T-cell (primary cell): ENCODE measurements at regions of chr1 and their contacts with region 1.

Region 1: GRCh38 chr1:212595787-212596714 is 12.5 kb upstream of the ATF3 start:
- DNase-seq: peak in 13 of 35 experiments; percentile 8 to 73 (median 23)
- ATAC-seq: peak; percentile 88 to 97 (median 92)
- H3K4me3 ChIP-seq: peak overlapping the region in 1 of 2 donors; percentile 19
- H3K4me3 Mint-ChIP-seq: peak overlapping the region; percentile 59 to 77 (median 76)
- H3K27ac ChIP-seq: peak overlapping the region; percentile 64
- H3K27ac Mint-ChIP-seq: peak overlapping the region; percentile 85 to 88
- H3K4me1 ChIP-seq: peaks cover 6 to 10% of the 10 kb centered on the region in 2 experiments
- H3K4me1 Mint-ChIP-seq: peaks cover 16 to 17% (median 17%) of the 10 kb centered on the region in 3 donors
- H3K27me3 ChIP-seq: peaks cover 0 to 7% of the 10 kb centered on the region in 2 experiments
- H3K27me3 Mint-ChIP-seq: peaks cover 20 to 23% of the 10 kb centered on the region in 2 donors

Region 2: GRCh38 chr1:212558693-212559480 is 37.2 kb before region 1 on chr1:
- CTCF ChIA-PET with region 1: interaction called in 1 of 2 experiments, 3 read pairs
- POLR2A ChIA-PET with region 1: interaction called in 1 of 2 experiments, 11 read pairs
- DNase-seq: peak; percentile 83 to 96 (median 90)
- ATAC-seq: peak; percentile 95 to 98 (median 96)
- H3K4me3 ChIP-seq: peak overlapping the region; percentile 77 to 84
- H3K4me3 Mint-ChIP-seq: peak overlapping the region; percentile 76 to 84 (median 78)
- H3K27ac ChIP-seq: peak overlapping the region; percentile 88
- H3K27ac Mint-ChIP-seq: peak overlapping the region; percentile 82 to 95
- H3K4me1 ChIP-seq: peaks cover 7 to 15% of the 10 kb centered on the region in 2 experiments
- H3K4me1 Mint-ChIP-seq: peaks cover 6 to 13% (median 11%) of the 10 kb centered on the region in 3 donors
- H3K27me3 ChIP-seq: peaks cover 0 to 3% of the 10 kb centered on the region in 2 experiments
- H3K27me3 Mint-ChIP-seq: peaks cover 0 to 3% of the 10 kb centered on the region in 2 donors

Region 3: DNA sequence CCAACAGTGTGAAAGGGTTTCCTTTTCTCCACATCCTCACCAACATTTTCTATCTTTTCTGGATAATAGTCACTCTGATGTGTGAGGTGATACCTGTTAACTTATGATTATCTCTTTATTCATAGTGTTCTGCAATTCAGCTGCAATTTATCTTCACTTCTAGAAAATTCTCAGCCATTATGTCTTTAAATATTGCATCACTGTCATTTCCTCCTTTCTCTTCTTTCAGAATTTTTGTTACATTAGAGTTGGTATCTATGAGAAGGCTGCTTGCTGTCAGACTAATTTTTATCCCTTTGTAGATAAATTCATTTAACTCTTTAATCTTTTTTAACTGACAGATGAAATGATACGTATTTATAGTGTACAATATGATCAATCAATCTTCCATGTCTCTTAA is 18.0 kb before region 1 on chr1:
- CTCF ChIA-PET with region 1: no interaction called
- POLR2A ChIA-PET with region 1: no interaction called
- DNase-seq: no peak
- ATAC-seq: no peak
- H3K4me3 ChIP-seq: no peak overlapping the region
- H3K4me3 Mint-ChIP-seq: no peak overlapping the region
- H3K27ac ChIP-seq: no peak overlapping the region
- H3K27ac Mint-ChIP-seq: no peak overlapping the region
- H3K4me1 ChIP-seq: no peaks in the 10 kb centered on the region
- H3K4me1 Mint-ChIP-seq: peaks cover 0 to 3% (median 0%) of the 10 kb centered on the region in 3 donors
- H3K27me3 ChIP-seq: peaks cover 0 to 17% of the 10 kb centered on the region in 2 experiments
- H3K27me3 Mint-ChIP-seq: peaks cover 26 to 27% of the 10 kb centered on the region in 2 donors

Region 4: GRCh38 chr1:212608209-212608955 is 12.3 kb after region 1 on chr1 and contains the start of gene ATF3:
- CTCF ChIA-PET with region 1: interaction called in 1 of 2 experiments, 6 read pairs
- POLR2A ChIA-PET with region 1: interaction called in 1 of 2 experiments, 15 read pairs
- DNase-seq: peak; percentile 37 to 85 (median 63)
- ATAC-seq: peak; percentile 74 to 76 (median 75)
- H3K4me3 ChIP-seq: peak within 1 kb of the TSS; percentile 79 to 84
- H3K4me3 Mint-ChIP-seq: peak within 1 kb of the TSS; percentile 86 to 92 (median 91)
- H3K27ac ChIP-seq: no peak within 1 kb of the TSS
- H3K27ac Mint-ChIP-seq: peak within 1 kb of the TSS; percentile 16 to 72
- H3K4me1 ChIP-seq: peaks cover 21 to 29% of the 10 kb centered on the region in 2 experiments
- H3K4me1 Mint-ChIP-seq: peaks cover 24 to 31% (median 24%) of the 10 kb centered on the region in 3 donors
- H3K27me3 ChIP-seq: peaks cover 17 to 59% of the 10 kb centered on the region in 2 experiments
- H3K27me3 Mint-ChIP-seq: peaks cover 53 to 66% of the 10 kb centered on the region in 2 donors
- total RNA-seq, gene ATF3: 1.5 to 20.1 (median 3.1) TPM

Region 5: DNA sequence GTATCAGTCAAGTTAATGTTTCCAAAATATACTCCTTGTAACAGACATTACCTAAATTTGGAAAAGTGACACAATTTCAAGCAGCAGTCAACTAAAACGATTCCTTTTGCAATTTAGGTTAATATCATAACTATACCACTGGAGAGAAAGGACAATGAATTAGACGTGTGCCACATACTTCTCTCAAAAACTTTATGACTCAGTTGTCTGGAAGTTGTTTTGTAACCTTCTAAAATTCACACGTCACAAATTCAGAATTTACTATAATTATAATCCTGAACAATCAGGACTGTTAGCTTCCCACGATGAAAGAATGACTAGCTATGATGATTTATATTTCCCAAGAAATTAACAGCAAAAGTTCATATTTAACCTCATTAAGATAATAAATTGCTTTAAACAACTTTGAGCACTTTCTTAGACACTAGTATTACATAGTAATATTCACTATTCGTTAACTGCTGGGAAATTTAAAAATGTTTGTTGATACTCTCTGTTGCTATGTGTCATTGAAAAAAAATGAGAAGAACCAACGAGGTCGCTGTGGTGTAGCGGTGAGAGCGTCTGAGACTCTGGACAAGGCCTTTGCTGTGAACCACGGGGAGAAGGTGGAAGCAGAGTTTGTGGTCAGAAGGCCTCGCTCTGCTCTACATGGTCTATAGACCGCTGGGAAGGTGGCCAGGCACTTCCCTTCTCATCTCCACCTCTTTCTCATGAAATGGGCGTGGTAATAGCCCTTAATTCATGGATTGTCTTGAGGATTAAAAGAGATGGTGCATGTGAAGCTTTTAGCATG is 131.5 kb after region 1 on chr1:
- CTCF ChIA-PET with region 1: no interaction called
- POLR2A ChIA-PET with region 1: no interaction called
- DNase-seq: peak in 7 of 35 experiments; percentile 4 to 30 (median 16)
- ATAC-seq: no peak
- H3K4me3 ChIP-seq: no peak overlapping the region
- H3K4me3 Mint-ChIP-seq: no peak overlapping the region
- H3K27ac ChIP-seq: no peak overlapping the region
- H3K27ac Mint-ChIP-seq: peak overlapping the region in 1 of 2 donors; percentile 11
- H3K4me1 ChIP-seq: peaks cover 0 to 3% of the 10 kb centered on the region in 2 experiments
- H3K4me1 Mint-ChIP-seq: peaks cover 0 to 18% (median 6%) of the 10 kb centered on the region in 3 donors
- H3K27me3 ChIP-seq: no peaks in the 10 kb centered on the region
- H3K27me3 Mint-ChIP-seq: no peaks in the 10 kb centered on the region